Activated CD4-positive, alpha-beta memory T cell treated with anti-CD3 and anti-CD28 coated beads, Interleukin-2, amount 10 ng/mL, durations not matched to agents 7 days and 5 days (primary cell): ENCODE measurements at regions of chr20 and their contacts with region 1.

Region 1: DNA sequence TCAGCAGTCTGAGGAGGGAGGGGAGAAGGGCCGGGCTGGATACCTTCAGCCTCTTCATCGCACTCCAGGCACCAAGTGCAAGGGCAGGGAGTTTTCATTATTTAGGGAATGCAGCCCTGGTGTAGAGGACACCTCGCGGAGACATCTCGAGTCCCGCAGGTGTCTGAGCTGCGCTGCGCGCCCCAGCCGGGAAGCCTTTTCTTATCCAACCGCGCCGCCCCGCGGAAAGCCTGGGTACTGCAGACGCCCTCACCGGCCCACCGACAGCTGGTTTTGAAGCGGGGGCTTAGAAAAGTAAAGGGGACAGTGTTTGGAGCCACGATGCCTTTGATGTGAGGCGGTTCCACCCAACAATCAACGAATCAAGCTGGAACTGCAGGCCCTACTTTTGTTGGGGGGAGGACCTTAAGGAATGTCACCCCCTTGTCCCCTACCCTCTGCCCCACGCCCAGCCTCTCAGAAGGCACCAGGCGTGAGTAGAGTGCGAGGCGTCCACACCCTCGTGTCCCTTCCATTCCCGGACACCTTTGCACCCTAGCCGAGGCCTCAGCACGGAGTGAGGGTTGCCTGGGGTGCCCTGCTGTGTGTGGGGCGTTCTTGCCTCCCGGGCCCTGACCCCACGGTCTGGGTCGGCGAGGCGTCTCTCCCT is 8.6 kb downstream of the NKX2-2 start:
- DNase-seq: peak; percentile 74
- H3K4me3 Mint-ChIP-seq: peak overlapping the region; percentile 39
- H3K27ac Mint-ChIP-seq: no peak overlapping the region
- H3K4me1 Mint-ChIP-seq: peaks cover 37% of the 10 kb centered on the region
- H3K27me3 Mint-ChIP-seq: peaks cover 52% of the 10 kb centered on the region

Region 2: DNA sequence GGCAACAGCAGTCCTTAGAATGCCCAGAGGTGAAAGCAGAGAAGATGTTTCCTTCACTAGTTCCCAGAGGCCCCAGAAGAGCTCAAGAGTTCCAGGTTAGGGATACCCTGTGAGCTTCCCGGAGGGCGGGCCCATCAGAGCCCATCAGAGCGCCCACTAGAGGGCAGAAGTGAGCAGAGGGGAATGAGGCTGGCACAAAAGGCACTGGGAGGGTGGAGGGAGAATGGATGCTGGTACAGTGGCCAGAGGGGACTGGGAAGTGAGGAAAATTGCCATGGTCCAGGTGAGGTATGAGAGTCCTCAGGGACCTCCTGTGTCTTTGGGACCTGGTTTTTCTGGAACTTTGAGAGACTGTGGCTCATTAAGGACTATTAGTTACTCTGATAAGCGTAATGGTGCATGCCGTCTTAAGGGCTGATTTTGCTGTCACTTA is 456.4 kb before region 1 on chr20:
- CTCF ChIA-PET with region 1: interaction called, 12 read pairs
- POLR2A ChIA-PET with region 1: no interaction called
- DNase-seq: peak; percentile 51
- H3K4me3 Mint-ChIP-seq: no peak overlapping the region
- H3K27ac Mint-ChIP-seq: no peak overlapping the region
- H3K4me1 Mint-ChIP-seq: no peaks in the 10 kb centered on the region
- H3K27me3 Mint-ChIP-seq: peaks cover 12% of the 10 kb centered on the region

Region 3: GRCh38 chr20:21395666-21396598 is 109.4 kb before region 1 on chr20:
- CTCF ChIA-PET with region 1: interaction called, 10 read pairs
- POLR2A ChIA-PET with region 1: interaction called, 3 read pairs
- DNase-seq: peak; percentile 40
- H3K4me3 Mint-ChIP-seq: peak overlapping the region; percentile 63
- H3K27ac Mint-ChIP-seq: no peak overlapping the region
- H3K4me1 Mint-ChIP-seq: peaks cover 26% of the 10 kb centered on the region
- H3K27me3 Mint-ChIP-seq: peaks cover 75% of the 10 kb centered on the region